AG04449 (cell line): ENCODE measurements at regions of chr6 and their contacts with region 1.

Region 1: DNA sequence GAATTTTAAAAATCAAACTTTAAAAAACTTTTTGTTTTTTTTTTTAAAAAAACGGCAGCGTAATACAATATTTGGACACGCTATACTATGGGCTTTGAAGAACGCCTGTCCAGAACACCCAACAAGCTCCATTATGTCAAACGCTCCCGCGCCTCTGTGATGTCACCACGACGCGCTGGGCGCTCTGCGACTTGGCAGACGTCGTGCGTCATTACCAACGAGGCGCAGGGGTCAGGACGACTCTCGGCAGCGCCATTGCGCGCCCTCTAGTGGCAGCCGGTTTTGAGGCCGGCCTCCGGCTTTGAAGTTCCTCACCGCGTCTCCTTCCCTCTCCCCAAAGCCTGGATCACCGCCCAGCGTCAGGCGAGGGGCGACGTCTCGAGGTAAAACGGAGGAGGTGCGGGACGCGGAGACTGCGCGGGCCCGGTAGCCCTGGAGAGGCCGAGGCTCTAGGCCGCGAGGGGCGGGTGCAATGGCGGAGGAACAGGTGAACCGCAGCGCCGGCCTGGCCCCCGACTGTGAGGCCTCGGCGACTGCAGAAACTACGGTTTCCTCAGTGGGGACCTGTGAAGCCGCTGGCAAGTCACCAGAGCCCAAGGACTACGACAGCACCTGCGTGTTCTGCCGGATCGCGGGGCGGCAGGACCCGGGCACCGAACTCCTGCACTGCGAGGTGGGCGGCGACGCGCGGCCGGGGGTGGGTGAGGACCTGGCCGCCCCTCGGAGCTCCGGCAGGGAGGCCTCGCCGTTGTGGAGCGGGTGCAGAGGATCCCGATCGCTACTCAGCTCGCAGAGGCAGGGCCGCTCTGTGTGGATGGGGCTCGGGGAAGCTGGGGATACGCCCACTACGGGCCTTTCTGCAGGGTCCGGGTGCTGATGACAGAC is at the start of gene HINT3:
- DNase-seq: peak; percentile 79
- H3K4me3 ChIP-seq: peak within 1 kb of the TSS; percentile 91
- CTCF ChIP-seq: peak; percentile 94

Region 2: GRCh38 chr6:125790358-125791150 is 166.2 kb before region 1 on chr6 and contains the start of gene NCOA7:
- CTCF ChIA-PET with region 1: interaction called, 241 read pairs
- POLR2A ChIA-PET with region 1: interaction called, 4 read pairs
- DNase-seq: no peak
- H3K4me3 ChIP-seq: peak within 1 kb of the TSS; percentile 72
- CTCF ChIP-seq: peak; percentile 11

Region 3: GRCh38 chr6:125899726-125900182 is 57.0 kb before region 1 on chr6:
- CTCF ChIA-PET with region 1: interaction called, 14 read pairs
- POLR2A ChIA-PET with region 1: no interaction called
- DNase-seq: no peak
- H3K4me3 ChIP-seq: no peak overlapping the region
- CTCF ChIP-seq: no peak

Region 4: GRCh38 chr6:125918681-125919566 is 37.8 kb before region 1 on chr6:
- CTCF ChIA-PET with region 1: interaction called, 28 read pairs
- POLR2A ChIA-PET with region 1: interaction called, 4 read pairs
- DNase-seq: no peak
- H3K4me3 ChIP-seq: no peak overlapping the region
- CTCF ChIP-seq: no peak

Region 5: DNA sequence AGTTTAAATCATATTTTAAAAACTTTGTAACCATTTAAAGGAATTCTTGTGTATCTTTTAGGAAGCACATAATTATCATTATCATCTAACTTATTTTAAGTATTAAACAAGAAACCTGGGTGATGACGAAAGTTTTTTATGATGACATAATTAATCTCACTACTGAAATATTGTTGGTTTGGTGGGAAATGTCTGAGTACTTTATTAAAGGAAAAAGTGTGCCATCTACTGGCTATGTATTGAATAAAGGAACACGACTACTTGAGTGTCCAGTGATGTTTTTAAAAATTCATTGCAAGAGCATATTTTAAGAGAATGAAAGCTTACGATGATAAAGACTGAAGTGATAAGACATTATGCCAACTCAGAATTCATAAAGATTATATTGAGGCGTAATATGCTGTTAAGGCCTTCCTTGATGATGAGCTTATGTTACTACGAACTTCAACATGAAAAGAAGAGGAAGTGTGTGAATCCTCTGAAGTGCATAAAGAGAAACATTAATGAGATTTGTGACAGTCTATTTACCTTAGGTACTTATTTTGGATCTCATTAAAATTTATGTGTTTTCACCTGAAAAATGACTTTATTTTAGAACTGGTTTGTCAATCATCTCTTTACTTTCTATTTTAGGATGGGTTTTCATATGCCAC is 17.6 kb after region 1 on chr6:
- CTCF ChIA-PET with region 1: interaction called, 69 read pairs
- POLR2A ChIA-PET with region 1: interaction called, 3 read pairs
- DNase-seq: no peak
- H3K4me3 ChIP-seq: no peak overlapping the region
- CTCF ChIP-seq: no peak

Region 6: DNA sequence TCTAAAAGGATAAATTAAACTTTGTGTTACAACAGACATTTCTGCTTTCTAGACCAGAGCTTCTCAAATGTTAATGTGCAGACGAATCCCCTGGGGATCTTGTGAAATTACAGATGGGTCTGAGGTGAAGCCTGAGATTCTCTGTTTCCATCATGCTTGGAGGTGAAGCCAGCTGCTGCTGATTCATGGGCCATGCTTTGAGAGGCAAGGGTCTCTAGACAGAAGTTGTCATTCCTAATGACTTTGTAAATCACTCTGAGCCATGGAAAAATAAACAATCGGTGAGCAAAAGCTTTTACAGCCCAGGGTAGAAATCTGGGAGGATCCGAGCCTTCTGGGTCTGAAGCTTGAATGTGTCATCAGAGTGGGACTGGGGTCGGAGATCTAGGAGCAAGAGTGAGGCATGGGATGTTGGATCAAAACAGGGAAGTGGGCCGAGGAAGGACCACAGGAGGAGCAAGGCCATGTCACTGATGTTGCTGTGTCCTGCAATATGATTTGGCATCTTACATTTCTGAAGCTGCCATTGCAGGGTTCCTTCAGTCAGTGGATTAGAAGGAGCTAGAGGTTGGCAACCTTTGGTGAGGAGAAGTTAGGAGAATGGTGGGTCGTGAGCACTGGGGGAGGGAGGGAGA is 106.9 kb after region 1 on chr6:
- CTCF ChIA-PET with region 1: no interaction called
- POLR2A ChIA-PET with region 1: no interaction called
- DNase-seq: no peak
- H3K4me3 ChIP-seq: no peak overlapping the region
- CTCF ChIP-seq: no peak